Vagina (tissue), 2 donors: ENCODE measurements at regions of chr5 and their contacts with region 1.

Region 1: GRCh38 chr5:32329308-32329834 is 16.6 kb upstream of the MTMR12 start:
- DNase-seq: no peak
- H3K4me3 ChIP-seq: no peak overlapping the region
- H3K27ac ChIP-seq: no peak overlapping the region
- H3K4me1 ChIP-seq: peaks cover 8% of the 10 kb centered on the region
- H3K27me3 ChIP-seq: no peaks in the 10 kb centered on the region
- CTCF ChIP-seq: peak; percentile 8 to 55 (median 21)
- POLR2A ChIP-seq: no peak

Region 2: GRCh38 chr5:32225445-32225844 is 103.9 kb before region 1 on chr5:
- intact Hi-C with region 1: loop called (anchors 5 kb)
- DNase-seq: no peak
- H3K4me3 ChIP-seq: no peak overlapping the region
- H3K27ac ChIP-seq: peak overlapping the region; percentile 59
- H3K4me1 ChIP-seq: peaks cover 16% of the 10 kb centered on the region
- H3K27me3 ChIP-seq: no peaks in the 10 kb centered on the region
- CTCF ChIP-seq: no peak
- POLR2A ChIP-seq: no peak

Region 3: DNA sequence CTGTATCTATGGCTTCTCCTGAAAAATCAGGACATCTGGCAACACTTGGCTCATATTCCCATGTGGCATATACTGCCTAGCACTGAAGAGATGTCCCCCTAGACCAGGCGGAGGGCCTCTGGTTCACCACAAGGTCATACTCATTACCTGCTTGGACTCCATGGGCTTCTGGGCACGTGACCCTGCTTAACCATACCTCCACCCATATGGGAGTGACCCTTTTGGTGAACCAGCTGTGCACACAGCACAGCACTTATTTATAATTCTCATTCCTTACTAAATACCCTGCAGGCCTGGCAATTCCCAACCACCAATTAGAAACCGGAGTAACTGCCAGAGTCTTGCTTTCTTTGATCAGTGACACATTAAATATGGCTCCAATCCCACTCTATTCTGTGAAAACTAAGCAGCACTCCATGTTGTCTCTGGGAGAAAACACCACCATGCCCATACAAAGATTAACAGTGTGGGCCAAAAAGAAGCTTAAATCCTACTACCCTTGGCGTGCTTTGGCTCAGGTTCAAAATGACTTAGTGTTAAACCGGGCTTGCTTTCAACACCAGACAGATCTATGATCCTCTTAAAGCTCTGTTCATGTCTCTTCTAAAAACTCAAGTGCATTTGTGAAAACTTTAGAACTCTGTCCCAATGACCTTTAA is 74.4 kb before region 1 on chr5:
- intact Hi-C with region 1: no loop called
- DNase-seq: no peak
- H3K4me3 ChIP-seq: no peak overlapping the region
- H3K27ac ChIP-seq: no peak overlapping the region
- H3K4me1 ChIP-seq: peaks cover 13% of the 10 kb centered on the region
- H3K27me3 ChIP-seq: no peaks in the 10 kb centered on the region
- CTCF ChIP-seq: no peak
- POLR2A ChIP-seq: no peak

Region 4: DNA sequence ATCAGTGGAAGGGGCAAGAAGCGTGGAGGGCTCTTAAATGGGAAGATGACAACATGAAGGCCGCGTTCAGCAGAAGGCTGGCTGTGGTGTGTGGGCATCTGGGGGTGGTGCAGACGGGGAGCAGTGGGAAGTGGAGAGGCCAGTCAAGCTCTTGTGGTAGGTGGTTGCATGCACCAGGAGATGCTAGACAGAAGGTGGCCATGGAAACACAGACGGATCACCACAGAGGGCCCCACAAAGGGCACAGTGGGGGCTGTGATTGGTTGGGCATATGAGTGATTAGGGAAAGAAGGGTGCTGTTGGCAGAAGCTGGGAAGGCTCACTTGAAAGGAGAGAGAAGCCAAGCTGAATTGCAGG is 31.3 kb before region 1 on chr5:
- intact Hi-C with region 1: no loop called
- DNase-seq: no peak
- H3K4me3 ChIP-seq: no peak overlapping the region
- H3K27ac ChIP-seq: no peak overlapping the region
- H3K4me1 ChIP-seq: peaks cover 29% of the 10 kb centered on the region
- H3K27me3 ChIP-seq: no peaks in the 10 kb centered on the region
- CTCF ChIP-seq: no peak
- POLR2A ChIP-seq: no peak